SK-N-SH (cell line): ENCODE measurements at regions of chr11 and their contacts with region 1.

Region 1: DNA sequence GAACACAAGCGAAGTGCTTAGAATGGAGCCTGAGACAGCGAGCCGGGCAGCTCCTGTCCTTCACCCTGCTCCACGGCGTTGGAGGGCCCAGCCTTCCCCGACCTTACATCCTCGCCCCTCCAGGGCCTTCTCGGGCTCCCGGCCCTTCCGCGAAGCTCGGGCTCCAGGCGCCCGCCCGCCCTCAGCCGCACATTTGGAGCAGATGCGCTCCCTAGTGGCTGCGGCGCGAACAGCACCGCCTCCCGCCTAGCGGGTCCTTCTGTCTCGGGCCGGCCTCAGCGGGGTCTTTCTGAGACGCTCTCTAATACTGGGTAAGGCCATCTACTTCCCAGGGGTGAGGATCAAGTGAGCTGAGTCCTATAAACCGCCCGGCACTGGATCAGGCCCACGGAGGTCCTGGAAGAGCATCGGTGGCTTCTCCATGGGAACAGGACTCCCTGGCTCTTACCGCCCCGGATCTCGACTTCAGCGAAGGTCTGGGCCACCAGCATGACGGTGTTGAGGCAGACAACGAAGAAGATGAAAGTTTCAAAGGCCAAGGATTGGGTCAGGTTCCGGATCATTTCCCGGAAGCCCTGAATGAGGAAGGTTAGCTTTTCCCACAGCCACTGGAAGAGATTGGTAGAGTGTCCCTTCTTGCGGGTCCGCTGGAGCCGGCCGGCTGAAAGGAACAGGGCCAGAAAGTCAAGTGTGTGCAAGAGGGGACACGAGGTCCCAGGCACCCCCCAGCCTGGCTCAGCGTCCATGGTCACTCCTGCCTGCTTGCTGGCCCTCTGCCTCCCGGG is 3.7 kb downstream of the CATSPER1 start:
- DNase-seq: peak; percentile 95
- H3K4me3 ChIP-seq: peak overlapping the region; percentile 17 to 29; a peak in 2 of 4 replicates
- H3K27ac ChIP-seq: no peak overlapping the region
- H3K4me1 ChIP-seq: peaks cover 3 to 21% of the 10 kb centered on the region in 2 experiments; a peak in 3 of 4 replicates
- H3K27me3 ChIP-seq: no peaks in the 10 kb centered on the region
- CTCF ChIP-seq: peak; percentile 90
- EP300 ChIP-seq: no peak
- RAD21 ChIP-seq: peak; percentile 67

Region 2: GRCh38 chr11:65680192-65680743 is 342.3 kb before region 1 on chr11:
- CTCF ChIA-PET with region 1: no interaction called
- POLR2A ChIA-PET with region 1: no interaction called
- DNase-seq: no peak
- H3K4me3 ChIP-seq: no peak overlapping the region
- H3K27ac ChIP-seq: no peak overlapping the region
- H3K4me1 ChIP-seq: no peaks in the 10 kb centered on the region
- H3K27me3 ChIP-seq: peaks cover 9% of the 10 kb centered on the region
- CTCF ChIP-seq: no peak
- EP300 ChIP-seq: no peak
- RAD21 ChIP-seq: no peak

Region 3: DNA sequence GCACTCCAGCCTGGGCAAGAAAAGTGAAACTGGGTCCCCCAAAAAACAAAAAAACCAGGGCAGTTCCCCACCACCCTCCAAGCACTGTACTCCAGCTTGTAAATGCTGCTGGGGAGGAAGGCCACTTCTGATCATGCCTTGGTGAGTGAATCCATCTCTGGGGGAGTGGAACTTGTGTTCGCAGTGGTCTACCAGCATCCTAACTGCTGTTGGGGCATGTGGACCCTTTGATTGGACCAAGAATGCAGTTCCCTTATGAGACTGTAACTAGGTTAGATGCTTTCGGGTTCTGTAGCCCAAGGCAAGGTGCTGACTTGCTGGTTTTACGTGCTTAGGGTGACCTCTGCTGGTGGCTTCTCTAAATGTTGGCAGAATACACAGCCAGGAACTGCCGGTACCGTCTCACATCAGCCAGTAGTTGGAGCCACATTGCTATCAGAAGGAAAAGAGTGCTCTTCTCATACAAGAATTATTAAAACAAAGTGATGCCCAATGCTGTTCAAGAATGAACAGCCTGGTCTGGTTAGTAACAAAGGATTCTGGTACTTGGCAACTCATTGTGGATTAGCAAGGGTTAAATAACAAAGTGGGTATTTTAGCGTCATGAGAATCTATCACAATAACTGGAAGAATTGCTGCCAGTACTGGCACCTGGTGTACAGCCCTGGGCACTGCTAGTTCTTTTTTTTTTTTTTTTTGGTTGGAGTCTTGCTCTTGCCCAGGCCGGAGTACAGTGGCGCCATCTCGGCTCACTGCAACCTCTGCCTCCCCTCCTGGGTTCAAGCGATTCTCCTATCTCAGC is 33.6 kb before region 1 on chr11:
- CTCF ChIA-PET with region 1: interaction called, 13 read pairs
- POLR2A ChIA-PET with region 1: no interaction called
- DNase-seq: peak; percentile 85
- H3K4me3 ChIP-seq: peak overlapping the region in 1 of 2 experiments; percentile 4; a peak in 1 of 4 replicates
- H3K27ac ChIP-seq: peak overlapping the region; percentile 17 to 18; a peak in 2 of 4 replicates
- H3K4me1 ChIP-seq: peaks cover 0 to 2% of the 10 kb centered on the region in 2 experiments; a peak in 1 of 4 replicates
- H3K27me3 ChIP-seq: no peaks in the 10 kb centered on the region
- CTCF ChIP-seq: peak; percentile 100
- EP300 ChIP-seq: no peak
- RAD21 ChIP-seq: peak; percentile 97

Region 4: DNA sequence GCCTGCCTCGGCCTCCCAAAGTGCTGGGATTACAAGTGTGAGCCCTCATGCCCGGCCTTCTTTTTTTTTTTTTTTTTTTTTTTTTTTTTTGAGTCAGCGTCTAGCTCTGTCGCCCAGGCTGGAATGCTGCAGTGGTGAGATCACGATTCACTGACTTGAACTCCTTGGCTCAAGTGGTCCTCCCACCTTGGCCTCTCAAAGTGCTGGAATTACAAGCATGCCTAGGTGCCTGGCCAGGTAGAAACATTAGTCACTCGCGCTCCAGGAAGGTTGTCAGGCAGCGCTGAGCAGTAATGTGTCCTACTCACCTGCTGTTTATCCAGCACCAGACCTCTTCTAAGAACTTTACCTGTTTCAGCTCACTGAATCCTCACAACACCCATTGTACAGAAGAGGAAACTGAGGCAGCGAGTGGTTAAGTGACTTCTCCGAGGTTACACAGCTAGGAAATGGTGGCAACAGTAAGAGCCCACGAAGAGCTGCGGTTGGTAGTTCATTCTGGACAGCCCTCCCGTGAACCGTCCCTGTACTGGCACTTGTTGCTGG is 11.3 kb before region 1 on chr11:
- CTCF ChIA-PET with region 1: interaction called, 36 read pairs
- POLR2A ChIA-PET with region 1: no interaction called
- DNase-seq: no peak
- H3K4me3 ChIP-seq: no peak overlapping the region
- H3K27ac ChIP-seq: peak overlapping the region in 1 of 2 experiments; percentile 10; a peak in 1 of 4 replicates
- H3K4me1 ChIP-seq: peaks cover 15 to 24% of the 10 kb centered on the region in 2 experiments; a peak in 3 of 4 replicates
- H3K27me3 ChIP-seq: no peaks in the 10 kb centered on the region
- CTCF ChIP-seq: no peak
- EP300 ChIP-seq: no peak
- RAD21 ChIP-seq: no peak

Region 5: DNA sequence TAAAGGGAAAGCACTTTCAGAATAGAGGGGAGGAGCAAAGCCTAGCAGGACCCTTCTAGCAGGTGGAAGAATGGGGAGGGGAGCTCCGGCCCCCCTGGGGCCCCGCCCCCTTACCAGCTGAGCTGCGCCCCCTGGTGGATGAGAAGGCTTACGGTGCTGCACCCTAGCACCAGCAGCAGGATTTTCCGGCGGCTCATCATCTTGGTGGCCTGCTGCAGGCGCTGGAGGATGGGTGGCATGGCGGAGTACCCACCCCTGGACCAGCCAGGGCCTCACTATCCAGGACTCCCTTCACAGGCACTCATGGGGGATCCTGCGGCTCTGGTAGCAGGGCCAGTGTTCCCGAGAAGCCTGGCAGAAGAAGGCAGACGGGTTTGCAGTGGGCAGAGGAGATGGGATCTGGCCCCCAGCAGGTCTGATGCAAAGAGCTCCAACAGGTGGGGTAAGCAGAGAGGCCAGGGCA is 22.6 kb after region 1 on chr11:
- CTCF ChIA-PET with region 1: interaction called, 55 read pairs
- POLR2A ChIA-PET with region 1: interaction called, 7 read pairs
- DNase-seq: peak; percentile 97
- H3K4me3 ChIP-seq: peak overlapping the region in 1 of 2 experiments; percentile 53; a peak in 1 of 4 replicates
- H3K27ac ChIP-seq: peak overlapping the region in 1 of 2 experiments; percentile 22; a peak in 1 of 4 replicates
- H3K4me1 ChIP-seq: peaks cover 6 to 32% of the 10 kb centered on the region in 2 experiments; a peak in 1 of 4 replicates
- H3K27me3 ChIP-seq: no peaks in the 10 kb centered on the region
- CTCF ChIP-seq: peak; percentile 86
- EP300 ChIP-seq: no peak
- RAD21 ChIP-seq: peak; percentile 45

Region 6: GRCh38 chr11:66069715-66070603 is 47.4 kb after region 1 on chr11 and contains the start of gene PACS1:
- CTCF ChIA-PET with region 1: interaction called, 17 read pairs
- POLR2A ChIA-PET with region 1: no interaction called
- DNase-seq: peak; percentile 94
- H3K4me3 ChIP-seq: peak within 1 kb of the TSS; percentile 83 to 85
- H3K27ac ChIP-seq: peak within 1 kb of the TSS; percentile 86 to 94
- H3K4me1 ChIP-seq: peaks cover 20 to 30% of the 10 kb centered on the region in 2 experiments; a peak in 3 of 4 replicates
- H3K27me3 ChIP-seq: no peaks in the 10 kb centered on the region
- CTCF ChIP-seq: no peak
- EP300 ChIP-seq: peak in 1 of 2 experiments; percentile 13; a peak in 1 of 4 replicates
- RAD21 ChIP-seq: no peak
- polyA plus RNA-seq, gene PACS1: 24.8 and 37.3 TPM in 2 replicates